ENCODE measurements at regions of chrX and their contacts with region 1.

Region 1: DNA sequence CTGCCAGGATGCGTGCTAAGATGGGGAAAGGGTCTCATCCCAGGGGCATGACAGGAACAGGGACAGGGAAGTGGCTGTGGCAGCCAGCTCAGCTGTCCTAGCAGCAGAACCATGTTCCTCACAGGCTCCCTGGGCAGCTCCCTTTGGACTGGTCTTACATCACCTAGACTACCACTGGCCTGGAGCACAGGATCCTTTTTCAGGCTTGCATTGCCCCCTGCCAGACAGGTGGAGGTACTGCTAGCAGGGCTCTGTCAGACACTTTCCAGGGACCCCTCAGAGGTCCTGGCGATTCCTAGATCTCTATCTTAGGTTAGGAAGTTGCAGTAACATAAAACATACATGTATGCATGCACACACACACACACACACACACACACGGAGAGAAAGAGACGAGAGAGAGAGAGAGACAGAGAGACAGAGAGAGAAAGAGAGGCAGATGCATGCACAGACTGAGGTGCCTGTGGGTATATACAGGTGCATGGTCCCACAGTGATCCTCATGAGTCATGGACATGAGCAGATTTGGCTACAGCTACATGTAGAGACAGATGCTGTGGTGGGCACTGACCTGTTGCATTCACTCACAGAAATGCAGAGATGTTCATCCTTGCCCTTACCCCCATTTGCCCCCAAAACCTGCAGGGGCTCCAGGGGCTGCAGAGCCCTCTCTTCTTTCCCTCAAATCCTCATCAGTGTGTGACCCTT is 63.6 kb downstream of the STARD8 start:
- DNase-seq: peak in 1 of 9 donors; percentile 21
- ATAC-seq: no peak
- H3K4me3 ChIP-seq: no peak overlapping the region
- H3K4me3 Mint-ChIP-seq: no peak overlapping the region
- H3K27ac ChIP-seq: no peak overlapping the region
- H3K27ac Mint-ChIP-seq: no peak overlapping the region
- H3K4me1 ChIP-seq: no peaks in the 10 kb centered on the region
- H3K4me1 Mint-ChIP-seq: no peaks in the 10 kb centered on the region
- H3K27me3 ChIP-seq: no peaks in the 10 kb centered on the region
- H3K27me3 Mint-ChIP-seq: no peaks in the 10 kb centered on the region

Region 2: DNA sequence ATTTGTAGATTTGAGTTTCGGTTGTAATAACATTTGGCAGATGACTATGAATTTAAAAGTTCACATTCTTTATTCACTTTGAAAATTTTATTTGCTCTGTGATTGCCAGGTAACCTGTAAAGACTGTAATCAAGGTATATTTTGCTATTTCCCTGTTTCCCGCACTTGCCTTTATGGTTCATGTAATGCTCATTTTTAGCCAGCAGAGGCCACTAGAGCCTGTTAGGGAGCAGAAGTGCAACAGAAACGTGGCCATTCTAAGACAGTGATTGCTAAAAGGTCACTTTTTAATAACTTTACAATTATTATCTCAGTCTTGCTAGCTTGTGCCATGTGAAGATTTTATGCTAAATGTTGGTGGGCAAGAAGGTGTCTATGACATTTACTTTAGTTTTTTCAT is 199.8 kb before region 1 on chrX:
- CTCF ChIA-PET with region 1: no interaction called
- POLR2A ChIA-PET with region 1: no interaction called
- intact Hi-C with region 1: loop called in 1 of 2 experiments (anchors 1 kb)
- DNase-seq: peak in 6 of 9 donors; percentile 10 to 43 (median 29)
- ATAC-seq: peak; percentile 65
- H3K4me3 ChIP-seq: no peak overlapping the region
- H3K4me3 Mint-ChIP-seq: no peak overlapping the region
- H3K27ac ChIP-seq: no peak overlapping the region
- H3K27ac Mint-ChIP-seq: peak overlapping the region in 2 of 9 donors; percentile 10 to 29
- H3K4me1 ChIP-seq: peaks cover 0 to 5% of the 10 kb centered on the region in 2 donors
- H3K4me1 Mint-ChIP-seq: peaks cover 13 to 38% (median 27%) of the 10 kb centered on the region in 7 donors
- H3K27me3 ChIP-seq: no peaks in the 10 kb centered on the region
- H3K27me3 Mint-ChIP-seq: no peaks in the 10 kb centered on the region

Region 3: DNA sequence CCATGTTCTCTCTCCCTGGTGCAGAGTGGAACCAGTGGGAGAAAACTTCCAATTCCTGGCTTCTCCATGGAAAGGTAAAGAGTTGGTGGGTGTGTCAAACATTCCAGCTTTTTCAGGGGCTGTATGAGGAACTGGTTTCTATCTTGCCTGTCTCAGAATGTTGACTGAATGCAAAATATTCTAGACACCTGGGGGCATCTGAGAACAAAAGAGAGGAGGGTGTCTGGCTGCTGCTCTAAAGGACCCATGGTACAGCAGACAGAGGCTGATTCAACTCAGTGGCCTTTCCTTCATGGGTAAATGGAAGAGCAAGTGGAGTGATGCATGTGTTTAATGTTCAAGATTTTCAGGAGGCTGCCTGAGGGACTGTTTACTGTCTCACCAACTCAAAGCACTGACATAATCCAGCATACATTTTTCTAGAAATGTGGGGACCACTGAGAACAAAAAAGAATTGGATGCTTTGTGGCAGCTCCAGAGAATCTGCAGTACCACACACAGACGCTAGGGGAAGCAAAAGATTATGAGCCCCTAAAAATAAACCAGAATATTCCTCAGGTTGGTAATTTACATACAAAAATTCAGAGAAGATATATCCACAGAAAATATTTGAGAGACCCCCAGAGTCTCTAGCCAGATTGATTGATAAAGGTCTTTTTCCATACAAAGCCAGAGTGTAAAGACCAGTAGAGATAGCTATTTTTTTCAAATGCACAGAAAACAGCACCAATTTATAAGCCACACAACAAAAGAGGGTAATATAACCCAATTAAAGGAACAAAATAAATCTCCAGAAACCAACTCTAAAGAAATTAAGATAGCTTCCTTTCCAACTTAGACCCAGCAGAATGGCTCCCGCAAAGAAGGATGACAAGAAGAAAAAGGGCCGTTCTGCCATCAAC is 111.5 kb before region 1 on chrX:
- CTCF ChIA-PET with region 1: no interaction called
- POLR2A ChIA-PET with region 1: no interaction called
- intact Hi-C with region 1: loop called in 1 of 2 experiments (anchors 10 kb)
- DNase-seq: no peak
- ATAC-seq: no peak
- H3K4me3 ChIP-seq: no peak overlapping the region
- H3K4me3 Mint-ChIP-seq: no peak overlapping the region
- H3K27ac ChIP-seq: no peak overlapping the region
- H3K27ac Mint-ChIP-seq: no peak overlapping the region
- H3K4me1 ChIP-seq: no peaks in the 10 kb centered on the region
- H3K4me1 Mint-ChIP-seq: no peaks in the 10 kb centered on the region
- H3K27me3 ChIP-seq: no peaks in the 10 kb centered on the region
- H3K27me3 Mint-ChIP-seq: no peaks in the 10 kb centered on the region

Region 4: DNA sequence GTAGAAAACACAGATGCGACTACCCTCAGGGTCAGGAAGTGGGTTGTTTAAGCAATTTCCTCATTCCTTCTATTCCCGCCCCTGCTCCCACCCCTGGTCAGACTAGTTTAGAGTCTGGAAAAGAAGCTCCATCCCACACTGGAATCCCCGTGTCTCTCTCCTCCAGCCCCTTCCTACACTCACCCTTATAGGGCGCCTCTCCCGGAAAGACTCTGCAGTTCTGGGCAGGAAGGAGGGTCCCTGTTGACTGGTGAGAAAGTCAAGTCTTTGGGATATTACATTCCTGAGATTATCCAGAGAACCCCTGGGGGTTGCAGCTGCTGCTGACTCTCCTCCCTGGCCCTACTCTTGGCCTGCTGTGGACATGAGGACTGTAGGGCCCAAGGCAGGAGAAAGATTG is 51.6 kb before region 1 on chrX:
- CTCF ChIA-PET with region 1: no interaction called
- POLR2A ChIA-PET with region 1: no interaction called
- intact Hi-C with region 1: no loop called
- DNase-seq: no peak
- ATAC-seq: no peak
- H3K4me3 ChIP-seq: no peak overlapping the region
- H3K4me3 Mint-ChIP-seq: no peak overlapping the region
- H3K27ac ChIP-seq: no peak overlapping the region
- H3K27ac Mint-ChIP-seq: no peak overlapping the region
- H3K4me1 ChIP-seq: no peaks in the 10 kb centered on the region
- H3K4me1 Mint-ChIP-seq: no peaks in the 10 kb centered on the region
- H3K27me3 ChIP-seq: no peaks in the 10 kb centered on the region
- H3K27me3 Mint-ChIP-seq: peaks cover 0 to 8% (median 2%) of the 10 kb centered on the region in 5 donors

Region 5: DNA sequence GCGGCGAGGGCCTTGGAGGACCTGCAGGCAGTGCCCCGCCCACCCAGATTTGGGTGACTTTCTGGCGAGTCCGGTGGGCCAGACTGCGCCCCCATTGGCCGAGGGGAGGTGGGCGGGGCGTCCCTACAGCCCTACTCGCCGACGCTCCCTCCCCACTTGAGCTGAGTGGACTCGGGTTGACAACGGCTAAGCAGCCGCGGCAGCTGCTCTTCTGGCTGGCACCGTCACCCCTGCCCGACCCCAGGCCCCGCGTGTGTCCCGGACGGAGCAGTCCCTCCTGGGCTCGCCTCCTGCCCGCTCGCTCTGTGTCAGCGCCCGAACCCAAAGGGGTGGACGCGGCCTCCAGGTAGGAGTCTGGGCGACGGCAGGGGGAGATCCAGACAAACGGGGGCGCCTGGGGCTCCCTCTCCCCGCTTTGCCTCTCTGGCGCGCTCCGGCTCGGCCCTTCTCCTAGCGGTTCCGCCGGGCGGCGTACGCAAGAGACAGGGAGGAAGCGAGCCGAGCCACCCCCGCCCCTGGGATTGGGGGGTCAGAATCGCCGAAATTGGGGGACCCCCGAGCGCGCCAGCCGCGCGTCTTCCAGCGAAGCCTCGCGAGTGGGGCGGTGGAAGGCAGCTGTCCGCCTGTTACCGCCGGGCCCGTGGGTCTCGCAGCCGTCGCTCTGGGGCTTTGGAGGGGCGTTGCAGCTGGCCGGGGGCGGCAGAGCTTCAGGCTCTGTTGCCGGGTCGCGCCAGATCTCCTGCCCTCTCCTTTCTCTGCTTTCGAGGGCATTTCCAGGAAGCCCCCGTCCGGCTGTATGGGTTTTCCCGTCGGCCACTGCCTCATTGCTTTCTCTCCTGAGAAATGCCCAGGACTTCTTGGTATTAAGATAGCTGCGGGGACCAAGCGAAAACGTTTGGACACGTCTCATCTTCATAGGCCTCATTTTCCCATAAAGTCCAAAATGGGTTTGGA is 17.3 kb before region 1 on chrX:
- CTCF ChIA-PET with region 1: no interaction called
- POLR2A ChIA-PET with region 1: no interaction called
- intact Hi-C with region 1: no loop called
- DNase-seq: peak in 1 of 9 donors; percentile 24
- ATAC-seq: peak; percentile 73
- H3K4me3 ChIP-seq: no peak overlapping the region
- H3K4me3 Mint-ChIP-seq: peak overlapping the region in 8 of 10 donors; percentile 23 to 84 (median 40)
- H3K27ac ChIP-seq: no peak overlapping the region
- H3K27ac Mint-ChIP-seq: peak overlapping the region in 1 of 9 donors; percentile 82
- H3K4me1 ChIP-seq: no peaks in the 10 kb centered on the region
- H3K4me1 Mint-ChIP-seq: peaks cover 0 to 31% (median 0%) of the 10 kb centered on the region in 7 donors
- H3K27me3 ChIP-seq: no peaks in the 10 kb centered on the region
- H3K27me3 Mint-ChIP-seq: peaks cover 0 to 15% (median 6%) of the 10 kb centered on the region in 5 donors